IMR-90 (cell line): ENCODE measurements at regions of chr12 and their contacts with region 1.

Region 1: DNA sequence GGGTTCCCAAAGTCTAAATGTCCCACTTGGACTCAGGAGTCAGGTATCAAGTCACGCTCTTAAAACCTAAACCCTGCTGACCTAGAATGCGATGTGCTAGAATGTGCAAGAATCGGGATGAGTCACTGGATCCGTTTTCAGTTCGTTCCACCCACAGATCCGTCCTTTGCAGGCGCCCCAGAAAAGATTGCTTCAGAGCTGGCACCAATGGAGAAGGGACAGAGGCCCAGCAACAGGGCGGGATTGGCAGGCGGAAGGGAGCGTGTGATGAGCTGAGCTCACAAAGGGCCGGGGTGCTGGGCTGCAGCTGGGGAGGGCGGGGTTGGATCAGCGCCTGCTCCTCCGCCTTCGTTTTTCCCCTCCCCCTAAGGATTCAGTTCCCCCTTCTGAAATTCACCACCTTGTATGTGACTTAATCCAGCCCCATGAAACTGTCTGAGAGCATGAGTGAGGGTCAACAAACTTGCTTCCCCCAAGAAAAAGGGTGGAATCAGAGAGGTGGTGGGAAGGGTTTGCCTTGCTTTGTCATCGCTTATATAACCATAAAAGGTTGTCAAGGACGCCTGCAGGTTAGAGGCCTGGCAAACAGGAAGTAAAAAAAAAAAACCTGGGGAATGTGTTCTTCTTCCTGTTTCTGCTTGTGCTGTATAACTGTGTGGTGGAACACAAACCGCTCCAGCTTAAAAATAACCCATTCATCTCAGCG is 2.8 kb upstream of the UBC start:
- DNase-seq: peak; percentile 100
- ATAC-seq: peak; percentile 72
- H3K4me3 ChIP-seq: peak overlapping the region; percentile 40; the same call in 1 of the 2 replicates
- H3K27ac ChIP-seq: peak overlapping the region; percentile 88
- H3K4me1 ChIP-seq: peaks cover 11% of the 10 kb centered on the region
- H3K27me3 ChIP-seq: no peaks in the 10 kb centered on the region
- CTCF ChIP-seq: no peak
- POLR2A ChIP-seq: peak; percentile 57; the same call in 1 of the 2 replicates
- RAD21 ChIP-seq: no peak

Region 2: DNA sequence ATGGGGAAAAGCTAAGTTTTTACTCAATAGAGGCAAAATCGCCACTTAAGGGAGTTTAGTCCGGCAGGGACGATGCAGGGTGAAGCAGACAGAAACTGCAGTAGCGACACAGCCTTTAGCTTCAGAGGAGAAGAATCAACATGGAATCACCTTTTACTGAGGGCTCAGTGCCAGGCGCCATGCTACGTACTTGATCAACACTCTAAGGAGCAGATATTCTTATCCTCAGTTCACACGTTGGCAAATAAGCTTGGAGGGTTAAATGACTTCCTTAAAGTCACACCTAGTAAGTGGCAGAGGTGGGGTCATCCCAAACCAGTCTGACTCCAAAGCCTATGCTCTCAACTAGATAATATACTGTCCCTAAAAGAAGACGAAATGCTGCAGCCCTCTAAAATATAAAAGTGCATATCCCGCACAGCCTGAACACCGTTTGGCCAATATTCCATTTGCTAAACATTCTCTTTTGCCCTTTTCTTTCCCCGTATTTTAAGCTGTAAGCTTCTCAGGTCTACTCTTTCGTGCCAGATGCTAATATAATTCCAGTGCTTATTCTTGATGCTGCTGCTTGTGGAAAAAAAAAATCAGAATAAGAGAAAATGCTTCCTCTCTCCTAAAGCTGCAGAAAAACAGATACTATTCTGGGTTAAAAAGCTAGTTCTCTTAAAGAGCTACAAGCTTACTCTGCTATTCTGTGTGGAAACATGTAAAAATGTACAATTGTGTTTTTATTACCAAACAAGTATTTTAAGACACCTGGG is 955.5 kb before region 1 on chr12:
- CTCF ChIA-PET with region 1: no interaction called
- POLR2A ChIA-PET with region 1: interaction called, 12 read pairs
- dilution Hi-C with region 1: no loop called
- in situ Hi-C with region 1: no loop called
- intact Hi-C with region 1: no loop called
- DNase-seq: no peak
- ATAC-seq: no peak
- H3K4me3 ChIP-seq: no peak overlapping the region
- H3K27ac ChIP-seq: no peak overlapping the region
- H3K4me1 ChIP-seq: peaks cover 4% of the 10 kb centered on the region; the same call in 1 of the 2 replicates
- H3K27me3 ChIP-seq: no peaks in the 10 kb centered on the region
- CTCF ChIP-seq: no peak
- POLR2A ChIP-seq: no peak
- RAD21 ChIP-seq: no peak

Region 3: GRCh38 chr12:124940549-124941527 is 23.6 kb after region 1 on chr12:
- CTCF ChIA-PET with region 1: interaction called, 25 read pairs
- POLR2A ChIA-PET with region 1: interaction called, 6 read pairs
- dilution Hi-C with region 1: no loop called
- in situ Hi-C with region 1: no loop called
- intact Hi-C with region 1: loop called (anchors 2 kb)
- DNase-seq: peak; percentile 87
- ATAC-seq: peak; percentile 43
- H3K4me3 ChIP-seq: peak overlapping the region; percentile 9; the same call in 1 of the 2 replicates
- H3K27ac ChIP-seq: peak overlapping the region; percentile 46
- H3K4me1 ChIP-seq: peaks cover 2% of the 10 kb centered on the region; the same call in 1 of the 2 replicates
- H3K27me3 ChIP-seq: no peaks in the 10 kb centered on the region
- CTCF ChIP-seq: peak; percentile 86
- POLR2A ChIP-seq: no peak
- RAD21 ChIP-seq: peak; percentile 66